T-cell (primary cell): ENCODE measurements at regions of chr6 and their contacts with region 1.

Region 1: DNA sequence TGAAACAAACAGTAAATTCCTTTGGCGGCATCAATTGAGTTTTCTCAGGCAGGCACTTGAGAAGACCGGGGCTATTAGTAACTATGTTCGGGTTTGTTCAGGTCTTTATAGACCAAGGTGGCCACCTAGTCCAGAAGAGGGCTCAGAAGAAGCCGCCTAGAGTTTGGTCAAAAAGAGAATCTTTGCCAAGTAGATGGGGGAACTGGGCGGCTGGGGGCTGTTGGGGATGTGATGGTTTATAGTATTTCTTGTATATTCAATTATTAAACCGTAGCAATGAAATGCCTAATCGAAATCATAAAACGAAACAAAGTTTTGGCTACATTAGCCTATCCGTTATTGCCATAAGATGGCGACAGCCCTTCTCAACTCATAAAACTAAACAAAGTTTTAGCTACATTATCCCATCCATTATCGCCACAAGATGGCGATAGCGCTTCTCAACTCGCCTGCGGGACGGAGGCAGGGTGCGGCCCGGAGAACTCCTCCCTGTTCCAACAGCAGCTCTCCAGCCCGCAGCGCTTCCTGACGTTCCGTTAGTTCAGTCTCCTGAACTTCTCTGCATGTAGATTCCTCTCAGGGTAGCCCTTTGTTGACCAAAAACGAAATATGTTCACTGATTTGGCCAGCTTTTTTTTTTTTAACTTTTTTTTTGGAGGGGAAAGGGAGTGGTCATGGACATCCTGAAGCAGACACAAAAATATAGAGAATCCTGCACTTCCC is 120.5 kb upstream of the PRSS16 start:
- DNase-seq: peak; percentile 54 to 94 (median 74)
- ATAC-seq: peak; percentile 70 to 87 (median 84)
- H3K4me3 ChIP-seq: peak overlapping the region; percentile 11 to 27
- H3K4me3 Mint-ChIP-seq: peak overlapping the region; percentile 68 to 76 (median 69)
- H3K27ac ChIP-seq: peak overlapping the region; percentile 57
- H3K27ac Mint-ChIP-seq: peak overlapping the region; percentile 82 to 86
- H3K4me1 ChIP-seq: peaks cover 10 to 17% of the 10 kb centered on the region in 2 experiments
- H3K4me1 Mint-ChIP-seq: peaks cover 10 to 20% (median 16%) of the 10 kb centered on the region in 3 donors
- H3K27me3 ChIP-seq: no peaks in the 10 kb centered on the region
- H3K27me3 Mint-ChIP-seq: no peaks in the 10 kb centered on the region

Region 2: GRCh38 chr6:27156874-27157458 is 30.0 kb after region 1 on chr6:
- CTCF ChIA-PET with region 1: interaction called, 4 to 12 read pairs
- POLR2A ChIA-PET with region 1: interaction called, 7 to 8 read pairs
- DNase-seq: no peak
- ATAC-seq: peak in 1 of 4 experiments; percentile 7
- H3K4me3 ChIP-seq: peak overlapping the region; percentile 52 to 67
- H3K4me3 Mint-ChIP-seq: peak overlapping the region; percentile 81 to 87 (median 86)
- H3K27ac ChIP-seq: peak overlapping the region; percentile 35
- H3K27ac Mint-ChIP-seq: peak overlapping the region; percentile 77 to 91
- H3K4me1 ChIP-seq: peaks cover 15 to 20% of the 10 kb centered on the region in 2 experiments
- H3K4me1 Mint-ChIP-seq: peaks cover 40 to 44% (median 42%) of the 10 kb centered on the region in 3 donors
- H3K27me3 ChIP-seq: no peaks in the 10 kb centered on the region
- H3K27me3 Mint-ChIP-seq: no peaks in the 10 kb centered on the region

Region 3: DNA sequence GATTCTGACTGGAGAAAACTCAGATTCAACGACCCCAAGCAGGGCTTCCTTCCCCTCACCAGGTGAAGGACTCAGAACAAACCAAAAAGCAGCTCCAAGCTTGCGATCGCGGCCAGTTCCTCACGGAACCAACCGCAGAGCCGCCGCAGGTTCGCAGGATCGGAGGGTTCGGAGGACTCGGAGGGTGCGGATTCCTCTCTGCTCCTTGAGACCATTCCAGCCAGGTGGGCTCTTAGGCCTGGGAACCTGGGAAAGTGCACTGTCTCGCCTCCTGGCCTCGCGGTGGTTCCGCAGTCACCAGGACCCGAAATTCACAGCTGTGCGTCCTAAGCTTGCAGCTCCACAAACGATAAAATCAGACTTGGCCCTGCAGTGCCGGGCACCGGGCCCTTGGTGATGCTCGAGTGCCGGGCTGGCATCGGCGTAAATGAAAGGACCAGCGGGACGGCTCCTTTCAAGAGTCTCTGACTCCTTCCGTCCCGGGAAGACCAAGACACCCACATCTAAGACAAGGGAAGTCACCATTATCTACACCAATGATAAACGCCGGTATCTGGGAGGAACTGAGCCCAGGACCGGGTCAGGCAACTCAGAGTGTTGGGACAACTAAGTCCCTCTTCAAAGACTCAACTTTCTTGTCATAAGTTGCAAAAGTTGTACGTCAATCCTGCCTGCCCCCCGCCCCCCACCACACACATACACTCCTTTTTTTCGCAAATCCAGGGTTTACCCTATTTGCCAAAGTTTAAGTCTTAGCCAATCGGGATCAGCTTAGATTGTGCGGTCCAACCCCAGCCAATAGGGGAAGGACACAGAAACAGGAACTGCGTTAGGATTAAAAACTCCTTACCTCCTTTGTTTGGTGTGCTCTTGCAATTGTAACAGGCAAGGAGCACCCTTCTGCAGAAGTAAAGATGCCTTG is 50.8 kb after region 1 on chr6:
- CTCF ChIA-PET with region 1: interaction called in 1 of 2 experiments, 18 read pairs
- POLR2A ChIA-PET with region 1: no interaction called
- DNase-seq: peak; percentile 35 to 83 (median 58)
- ATAC-seq: peak; percentile 68 to 88 (median 76)
- H3K4me3 ChIP-seq: peak overlapping the region; percentile 77 to 100
- H3K4me3 Mint-ChIP-seq: peak overlapping the region; percentile 92 to 96 (median 96)
- H3K27ac ChIP-seq: peak overlapping the region; percentile 55
- H3K27ac Mint-ChIP-seq: peak overlapping the region; percentile 88 to 91
- H3K4me1 ChIP-seq: peaks cover 2 to 16% of the 10 kb centered on the region in 2 experiments
- H3K4me1 Mint-ChIP-seq: peaks cover 7 to 22% (median 15%) of the 10 kb centered on the region in 3 donors
- H3K27me3 ChIP-seq: peaks cover 0 to 3% of the 10 kb centered on the region in 2 experiments
- H3K27me3 Mint-ChIP-seq: peaks cover 4 to 5% of the 10 kb centered on the region in 2 donors